Activated CD4-positive, alpha-beta memory T cell treated with anti-CD3 and anti-CD28 coated beads, Interleukin-2, amount 10 ng/mL, durations not matched to agents 7 days and 5 days (primary cell): ENCODE measurements at regions of chr9 and their contacts with region 1.

Region 1: GRCh38 chr9:125706661-125707471 is at the start of gene MAPKAP1:
- DNase-seq: peak; percentile 93
- H3K4me3 Mint-ChIP-seq: peak within 1 kb of the TSS; percentile 86
- H3K27ac Mint-ChIP-seq: peak within 1 kb of the TSS; percentile 64
- H3K4me1 Mint-ChIP-seq: peaks cover 36% of the 10 kb centered on the region
- H3K27me3 Mint-ChIP-seq: no peaks in the 10 kb centered on the region
- total RNA-seq, gene MAPKAP1: 47.2 to 48.0 TPM

Region 2: GRCh38 chr9:125746017-125746773 is 39.3 kb after region 1 on chr9:
- CTCF ChIA-PET with region 1: no interaction called
- POLR2A ChIA-PET with region 1: interaction called, 16 read pairs
- DNase-seq: peak; percentile 93
- H3K4me3 Mint-ChIP-seq: peak overlapping the region; percentile 86
- H3K27ac Mint-ChIP-seq: peak overlapping the region; percentile 86
- H3K4me1 Mint-ChIP-seq: peaks cover 30% of the 10 kb centered on the region
- H3K27me3 Mint-ChIP-seq: peaks cover 27% of the 10 kb centered on the region

Region 3: DNA sequence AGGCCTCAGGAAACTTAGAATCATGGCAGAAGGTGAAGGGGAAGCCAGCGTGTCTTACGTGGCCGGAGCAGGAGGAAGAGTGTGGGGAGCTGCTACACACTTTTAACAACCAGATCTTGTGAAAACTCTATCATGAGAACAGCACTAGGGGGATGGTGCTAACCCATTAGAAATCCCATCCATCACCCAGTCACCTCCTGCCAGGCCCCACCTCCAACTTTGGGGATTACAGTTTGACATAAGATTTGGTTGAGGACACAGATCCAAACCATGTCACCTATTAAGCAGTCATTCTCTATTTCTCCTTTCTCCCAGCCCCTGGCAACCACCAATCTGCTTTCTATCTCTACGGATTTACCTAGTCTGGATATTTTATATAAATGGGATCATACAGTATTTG is 67.2 kb after region 1 on chr9:
- CTCF ChIA-PET with region 1: no interaction called
- POLR2A ChIA-PET with region 1: no interaction called
- DNase-seq: no peak
- H3K4me3 Mint-ChIP-seq: no peak overlapping the region
- H3K27ac Mint-ChIP-seq: no peak overlapping the region
- H3K4me1 Mint-ChIP-seq: no peaks in the 10 kb centered on the region
- H3K27me3 Mint-ChIP-seq: no peaks in the 10 kb centered on the region

Region 4: DNA sequence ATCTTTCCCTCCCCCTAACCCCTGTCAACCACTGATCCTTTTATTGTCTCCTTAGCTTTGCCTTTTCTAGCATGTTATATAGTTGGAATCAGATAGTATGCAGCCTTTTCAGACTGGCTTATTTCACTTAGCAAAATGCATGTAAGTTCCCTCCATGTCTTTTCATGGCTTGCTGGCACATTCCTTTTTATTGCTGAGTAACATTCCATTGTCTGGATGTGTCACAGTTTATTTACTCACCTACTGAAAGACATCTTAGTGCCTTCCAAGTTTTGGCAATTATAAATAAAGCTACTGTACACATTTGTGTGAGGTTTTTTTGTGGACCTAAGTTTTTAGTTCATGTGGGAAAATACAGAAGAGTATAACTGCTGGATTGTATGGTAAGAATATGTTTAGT is 270.4 kb after region 1 on chr9:
- CTCF ChIA-PET with region 1: no interaction called
- POLR2A ChIA-PET with region 1: no interaction called
- DNase-seq: no peak
- H3K4me3 Mint-ChIP-seq: no peak overlapping the region
- H3K27ac Mint-ChIP-seq: no peak overlapping the region
- H3K4me1 Mint-ChIP-seq: no peaks in the 10 kb centered on the region
- H3K27me3 Mint-ChIP-seq: peaks cover 9% of the 10 kb centered on the region